Activated CD4-positive, alpha-beta T cell treated with anti-CD3 and anti-CD28 coated beads for 36 hours (primary cell): ENCODE measurements at regions of chr19 and their contacts with region 1.

Region 1: DNA sequence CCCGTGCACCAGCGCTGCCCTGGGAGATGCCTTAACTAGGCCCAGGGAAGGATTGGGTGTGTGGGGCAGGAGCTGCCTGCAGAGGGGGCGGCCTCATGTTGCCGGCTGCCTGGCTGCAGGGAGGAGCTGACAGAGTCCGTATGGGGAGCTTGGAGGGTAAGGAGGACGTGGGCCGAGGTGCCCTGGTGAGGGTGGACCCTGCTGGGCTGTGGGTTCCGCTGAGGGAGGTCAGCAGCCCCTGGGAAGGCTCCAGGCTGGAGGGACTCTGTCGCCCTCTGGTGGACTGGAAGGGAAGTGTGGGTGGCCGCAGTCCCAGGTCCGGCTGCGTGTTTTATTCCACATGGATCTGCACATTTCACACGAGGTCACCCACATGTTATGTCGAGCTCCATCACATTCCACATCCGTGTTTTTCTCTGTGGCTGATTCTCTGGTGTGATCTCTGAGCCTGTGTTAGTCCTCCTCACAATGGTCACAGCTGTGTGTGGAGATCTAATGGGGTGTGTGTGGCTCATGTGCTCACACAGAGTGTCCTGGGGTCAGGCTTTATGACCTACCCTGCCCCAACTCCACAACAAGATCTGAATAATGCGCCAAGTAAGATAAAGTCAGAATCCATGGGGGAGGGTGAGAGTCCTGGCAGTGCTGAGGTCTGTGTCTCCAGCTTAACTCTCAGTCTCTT is 1.8 kb upstream of the CEACAM8 start:
- DNase-seq: peak; percentile 63
- ATAC-seq: peak; percentile 60
- H3K4me3 Mint-ChIP-seq: no peak overlapping the region
- H3K27ac Mint-ChIP-seq: no peak overlapping the region
- H3K4me1 Mint-ChIP-seq: no peaks in the 10 kb centered on the region
- H3K27me3 Mint-ChIP-seq: peaks cover 12% of the 10 kb centered on the region

Region 2: DNA sequence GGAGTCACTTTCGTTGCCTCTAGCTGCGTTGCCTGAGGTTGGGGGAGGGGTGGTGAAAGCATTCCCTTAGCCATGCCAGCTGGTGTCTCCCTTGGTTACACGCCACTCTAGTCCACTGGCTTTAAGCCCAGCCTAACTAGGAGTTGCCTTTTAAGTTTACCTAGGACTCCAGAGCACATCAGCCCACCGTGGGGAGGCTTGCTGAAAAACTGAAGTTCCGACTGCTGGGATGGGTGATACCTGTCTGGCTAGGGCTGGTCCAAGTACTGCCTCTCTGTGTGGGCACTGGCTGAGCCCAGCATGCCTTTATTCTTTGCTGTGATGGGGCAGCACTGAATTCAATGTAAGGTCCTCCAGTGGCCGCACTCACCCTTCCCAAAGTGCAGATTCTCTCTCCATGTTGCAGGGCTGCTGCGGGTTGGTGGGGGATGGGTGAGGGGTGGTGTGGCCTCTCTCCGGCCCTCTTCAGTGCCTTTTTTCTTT is 56.4 kb before region 1 on chr19:
- CTCF ChIA-PET with region 1: no interaction called
- POLR2A ChIA-PET with region 1: no interaction called
- intact Hi-C with region 1: no loop called
- DNase-seq: no peak
- ATAC-seq: no peak
- H3K4me3 Mint-ChIP-seq: no peak overlapping the region
- H3K27ac Mint-ChIP-seq: no peak overlapping the region
- H3K4me1 Mint-ChIP-seq: no peaks in the 10 kb centered on the region
- H3K27me3 Mint-ChIP-seq: peaks cover 2% of the 10 kb centered on the region

Region 3: DNA sequence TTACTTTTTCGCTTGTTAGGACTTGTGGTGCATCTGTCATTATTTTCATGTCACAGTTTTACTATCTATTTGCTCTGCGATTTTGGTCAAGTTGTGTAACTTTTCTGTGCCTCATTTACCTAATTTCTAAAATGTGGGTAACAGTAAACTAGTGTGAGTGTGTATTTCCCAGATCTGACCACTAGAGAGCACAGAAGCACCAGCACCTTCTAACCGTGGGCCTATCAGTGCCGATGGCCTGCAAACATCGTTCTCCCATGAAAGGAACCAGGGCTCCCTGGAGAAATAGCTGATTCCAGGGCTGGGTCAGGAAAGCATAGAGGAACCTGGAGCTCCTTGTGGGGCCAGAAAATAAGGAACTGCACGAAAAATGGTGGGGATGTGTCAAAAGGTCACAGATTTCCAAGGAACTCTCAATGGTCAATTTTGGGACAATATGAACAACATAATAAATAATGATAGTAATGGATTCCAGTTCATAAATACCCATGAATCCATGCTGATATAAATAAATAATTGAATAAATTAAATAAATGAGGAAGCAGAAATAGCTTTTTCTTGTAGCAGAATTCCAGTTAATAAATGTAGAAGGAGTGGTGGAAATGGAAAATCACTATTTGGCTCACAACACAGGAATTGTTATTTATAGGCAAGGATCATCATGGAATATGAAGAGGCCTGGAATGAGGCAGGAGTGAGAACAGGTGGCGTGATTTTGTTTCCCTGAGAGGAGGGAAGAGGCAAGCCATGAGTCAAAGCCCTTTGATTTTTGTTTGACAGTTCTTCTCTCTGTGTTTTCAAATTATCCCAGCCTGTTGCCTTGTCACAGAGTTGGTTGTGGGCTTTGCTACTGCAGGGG is 33.0 kb before region 1 on chr19:
- CTCF ChIA-PET with region 1: interaction called, 8 read pairs
- POLR2A ChIA-PET with region 1: interaction called, 4 read pairs
- intact Hi-C with region 1: loop called (anchors 1 to 5 kb)
- DNase-seq: peak; percentile 27
- ATAC-seq: peak; percentile 89
- H3K4me3 Mint-ChIP-seq: no peak overlapping the region
- H3K27ac Mint-ChIP-seq: no peak overlapping the region
- H3K4me1 Mint-ChIP-seq: peaks cover 2% of the 10 kb centered on the region
- H3K27me3 Mint-ChIP-seq: peaks cover 10% of the 10 kb centered on the region

Region 4: DNA sequence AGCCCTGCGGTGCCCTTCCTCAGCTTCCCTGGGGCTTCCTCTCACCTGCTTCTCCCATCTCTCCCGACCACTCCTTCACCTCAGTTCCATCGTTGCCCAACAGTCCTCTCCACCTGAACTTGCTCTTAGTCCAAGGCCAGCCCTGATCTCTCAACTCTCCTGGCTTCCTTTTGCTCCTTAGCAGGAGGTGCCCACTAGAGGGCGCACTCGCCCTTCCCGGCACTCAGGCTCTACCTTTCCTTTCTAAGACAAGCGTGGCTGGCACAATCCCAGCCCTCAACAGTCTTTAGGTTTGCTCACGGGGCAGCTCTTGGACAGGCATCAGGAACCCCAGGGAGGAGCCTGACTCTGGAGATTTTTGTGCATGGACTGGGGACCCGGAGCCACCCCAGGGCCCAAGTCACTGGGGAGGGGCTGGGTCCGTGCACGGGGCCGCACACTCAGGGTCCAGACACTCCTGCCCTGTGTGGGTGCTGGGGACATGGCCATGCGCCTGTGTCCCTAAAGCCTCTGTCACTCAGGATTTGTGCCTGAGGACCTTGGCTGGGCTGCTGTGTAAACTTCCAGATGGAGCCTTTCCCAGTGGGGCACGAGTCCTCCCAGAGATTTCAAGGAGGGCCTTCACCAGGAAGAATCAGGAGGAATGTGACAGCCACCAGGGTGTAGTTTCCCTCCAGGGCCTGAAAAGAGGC is 10.3 kb after region 1 on chr19:
- CTCF ChIA-PET with region 1: interaction called, 12 read pairs
- POLR2A ChIA-PET with region 1: no interaction called
- intact Hi-C with region 1: no loop called
- DNase-seq: peak; percentile 83
- ATAC-seq: peak; percentile 70
- H3K4me3 Mint-ChIP-seq: no peak overlapping the region
- H3K27ac Mint-ChIP-seq: no peak overlapping the region
- H3K4me1 Mint-ChIP-seq: no peaks in the 10 kb centered on the region
- H3K27me3 Mint-ChIP-seq: peaks cover 23% of the 10 kb centered on the region

Region 5: GRCh38 chr19:42628411-42629140 is 32.0 kb after region 1 on chr19:
- CTCF ChIA-PET with region 1: no interaction called
- POLR2A ChIA-PET with region 1: no interaction called
- intact Hi-C with region 1: no loop called
- DNase-seq: peak; percentile 40
- ATAC-seq: peak; percentile 97
- H3K4me3 Mint-ChIP-seq: no peak overlapping the region
- H3K27ac Mint-ChIP-seq: peak overlapping the region; percentile 43
- H3K4me1 Mint-ChIP-seq: peaks cover 16% of the 10 kb centered on the region
- H3K27me3 Mint-ChIP-seq: peaks cover 19% of the 10 kb centered on the region